ENCODE measurements at regions of chr22 and their contacts with region 1.

Region 1: DNA sequence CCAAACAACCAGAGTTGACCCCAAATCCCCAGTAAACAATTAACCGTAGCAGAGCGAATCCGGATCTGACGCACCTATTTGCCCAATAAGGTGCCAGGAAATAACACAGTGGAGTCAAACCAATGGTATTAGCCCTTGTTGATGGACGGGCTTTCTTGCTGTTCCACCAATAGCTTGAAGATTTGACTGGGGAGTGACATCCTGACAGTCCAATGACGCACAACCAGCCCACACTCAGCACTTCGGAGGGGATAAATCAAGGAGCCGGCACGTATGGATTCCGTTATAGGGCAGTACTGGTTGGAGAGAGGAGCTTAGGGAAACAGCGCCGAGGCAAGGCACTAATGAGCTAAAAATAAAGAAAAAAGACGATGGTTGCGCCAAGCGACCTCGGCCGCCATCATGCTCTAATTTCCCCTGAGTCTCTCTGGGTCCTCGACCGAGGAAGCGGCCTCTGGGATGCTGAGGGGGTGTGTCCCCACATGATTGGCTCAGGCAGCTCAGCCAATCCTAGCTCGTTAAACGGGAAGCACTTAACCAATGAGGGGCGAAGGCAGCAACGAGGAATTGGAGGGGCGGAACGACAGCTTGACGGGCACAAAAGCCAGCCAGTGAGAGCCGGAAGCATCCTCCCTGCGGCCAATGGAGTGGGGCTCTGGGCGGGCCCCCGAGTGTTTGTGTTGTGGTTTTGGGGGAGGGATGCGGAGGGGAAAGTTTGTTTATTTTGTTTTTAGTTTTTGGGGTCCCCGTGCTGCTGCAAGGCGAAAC is 49.5 kb downstream of the FAM83F start:
- DNase-seq: peak; percentile 98 to 99
- H3K4me3 ChIP-seq: peak overlapping the region; percentile 82 to 85
- H3K27ac ChIP-seq: peak overlapping the region; percentile 97 to 98
- H3K4me1 ChIP-seq: peaks cover 0 to 5% of the 10 kb centered on the region in 2 donors
- H3K27me3 ChIP-seq: no peaks in the 10 kb centered on the region
- CTCF ChIP-seq: no peak
- POLR2A ChIP-seq: peak; percentile 55 to 66

Region 2: DNA sequence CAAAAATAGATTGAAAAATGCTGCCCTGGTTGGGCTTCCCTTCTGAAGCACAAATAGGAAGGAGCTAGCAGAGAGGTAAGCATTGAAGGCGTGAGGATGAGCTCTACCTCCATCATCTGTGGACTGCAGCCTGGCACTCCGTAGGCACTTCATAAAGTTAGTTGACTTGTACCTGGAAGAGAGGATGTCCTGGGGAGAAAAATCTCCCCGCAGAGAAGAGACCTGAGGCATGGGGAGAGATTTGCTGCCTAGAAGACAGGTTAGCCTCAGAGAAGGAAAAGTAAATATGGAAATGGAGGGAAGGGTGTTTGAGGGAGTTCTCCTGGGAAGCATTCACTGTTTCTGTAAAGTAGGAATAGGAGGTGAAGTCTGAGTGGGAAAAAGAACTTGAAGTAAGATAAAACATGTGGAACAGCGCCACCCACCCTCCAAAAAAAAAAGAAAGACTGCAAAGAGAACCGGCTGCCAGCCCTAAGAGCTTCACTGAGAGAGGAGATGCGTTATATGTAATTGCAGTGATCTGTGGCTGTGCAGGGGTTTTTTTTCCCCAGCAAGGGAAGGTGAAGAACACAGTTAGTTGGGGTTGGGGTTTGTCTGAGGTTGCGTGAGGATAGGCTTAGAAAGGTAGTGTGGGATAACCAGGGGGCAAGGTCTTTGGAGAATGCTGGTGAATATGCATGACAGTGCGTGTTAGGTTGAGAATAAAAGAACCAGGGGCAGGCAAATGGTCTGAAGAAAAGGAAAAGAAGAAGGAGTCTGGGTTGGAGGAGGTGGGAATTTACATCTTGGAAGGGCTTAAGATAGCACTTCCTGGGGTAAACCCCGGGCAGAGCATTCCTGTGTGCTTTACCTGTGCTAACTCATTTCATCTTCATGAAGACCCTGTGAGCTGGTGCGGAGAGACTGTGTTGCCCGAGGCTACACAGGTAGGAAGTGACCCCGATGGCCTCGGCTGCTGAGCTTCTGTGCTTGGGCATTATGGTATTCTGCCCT is 149.4 kb after region 1 on chr22:
- intact Hi-C with region 1: loop called (anchors 10 kb)
- DNase-seq: peak in 1 of 2 donors; percentile 42
- H3K4me3 ChIP-seq: no peak overlapping the region
- H3K27ac ChIP-seq: peak overlapping the region; percentile 23 to 26
- H3K4me1 ChIP-seq: peaks cover 0 to 8% of the 10 kb centered on the region in 2 donors
- H3K27me3 ChIP-seq: no peaks in the 10 kb centered on the region
- CTCF ChIP-seq: peak in 3 of 4 experiments; percentile 10 to 33 (median 19)
- POLR2A ChIP-seq: no peak

Measured in uterus (tissue), 4 donors.